A549 (cell line): ENCODE measurements at regions of chr15 and their contacts with region 1.

Region 1: GRCh38 chr15:67303490-67304363 is 49.1 kb downstream of the IQCH start:
- DNase-seq: peak; percentile 30 to 76
- ATAC-seq: peak; percentile 71 to 90
- H3K4me3 ChIP-seq: no peak overlapping the region
- H3K27ac ChIP-seq: peak overlapping the region in 1 of 2 experiments; percentile 49; a peak in 2 of 6 replicates
- H3K4me1 ChIP-seq: peaks cover 20% of the 10 kb centered on the region; the same call in 2 of the 3 replicates
- CTCF ChIP-seq: peak; percentile 96
- EP300 ChIP-seq: no peak
- POLR2A ChIP-seq: no peak
- RAD21 ChIP-seq: peak; percentile 96 to 98

Region 2: DNA sequence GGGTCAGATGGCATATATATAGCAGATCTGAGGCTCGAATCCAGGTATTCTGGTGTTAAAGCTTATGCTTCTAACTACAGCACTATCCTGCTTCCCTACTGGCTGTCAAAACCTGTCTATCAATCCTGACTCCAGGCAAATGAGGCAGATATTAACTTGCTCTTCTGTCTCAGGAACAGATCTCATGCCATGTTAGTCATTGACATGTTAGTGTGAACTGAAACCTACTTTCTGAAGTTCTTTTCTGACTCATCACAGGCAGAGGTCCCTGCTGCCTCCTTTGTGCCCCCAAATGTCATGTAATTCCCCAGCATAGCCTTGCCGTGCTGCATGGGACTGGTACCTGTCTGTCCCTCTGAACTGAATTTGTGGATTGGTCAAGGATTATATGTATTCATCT is 363.4 kb before region 1 on chr15:
- CTCF ChIA-PET with region 1: interaction called, 115 read pairs
- POLR2A ChIA-PET with region 1: no interaction called
- DNase-seq: no peak
- ATAC-seq: peak; percentile 19 to 30; a peak in 4 of 6 replicates
- H3K4me3 ChIP-seq: no peak overlapping the region
- H3K27ac ChIP-seq: peak overlapping the region; percentile 2 to 64; a peak in 4 of 6 replicates
- H3K4me1 ChIP-seq: peaks cover 27% of the 10 kb centered on the region
- CTCF ChIP-seq: no peak
- EP300 ChIP-seq: no peak
- POLR2A ChIP-seq: no peak
- RAD21 ChIP-seq: no peak

Region 3: GRCh38 chr15:67080900-67081431 is 222.8 kb before region 1 on chr15:
- CTCF ChIA-PET with region 1: interaction called, 10 read pairs
- POLR2A ChIA-PET with region 1: no interaction called
- DNase-seq: peak in 1 of 2 experiments; percentile 71
- ATAC-seq: peak in 1 of 2 experiments; percentile 7; a peak in 2 of 6 replicates
- H3K4me3 ChIP-seq: no peak overlapping the region
- H3K27ac ChIP-seq: peak overlapping the region in 1 of 2 experiments; percentile 62; a peak in 4 of 6 replicates
- H3K4me1 ChIP-seq: peaks cover 99% of the 10 kb centered on the region
- CTCF ChIP-seq: peak; percentile 31; the same call in 2 of the 3 replicates
- EP300 ChIP-seq: no peak
- POLR2A ChIP-seq: no peak
- RAD21 ChIP-seq: peak in 1 of 2 experiments; percentile 32; a peak in 3 of 5 replicates

Region 4: GRCh38 chr15:67109141-67110034 is 194.3 kb before region 1 on chr15:
- CTCF ChIA-PET with region 1: no interaction called
- POLR2A ChIA-PET with region 1: no interaction called
- DNase-seq: peak; percentile 88 to 98
- ATAC-seq: peak; percentile 35 to 48
- H3K4me3 ChIP-seq: no peak overlapping the region
- H3K27ac ChIP-seq: peak overlapping the region; percentile 92 to 93
- H3K4me1 ChIP-seq: peaks cover 79% of the 10 kb centered on the region
- CTCF ChIP-seq: no peak
- EP300 ChIP-seq: peak; percentile 97 to 100
- POLR2A ChIP-seq: no peak
- RAD21 ChIP-seq: peak; percentile 26 to 66; a peak in 4 of 5 replicates

Region 5: DNA sequence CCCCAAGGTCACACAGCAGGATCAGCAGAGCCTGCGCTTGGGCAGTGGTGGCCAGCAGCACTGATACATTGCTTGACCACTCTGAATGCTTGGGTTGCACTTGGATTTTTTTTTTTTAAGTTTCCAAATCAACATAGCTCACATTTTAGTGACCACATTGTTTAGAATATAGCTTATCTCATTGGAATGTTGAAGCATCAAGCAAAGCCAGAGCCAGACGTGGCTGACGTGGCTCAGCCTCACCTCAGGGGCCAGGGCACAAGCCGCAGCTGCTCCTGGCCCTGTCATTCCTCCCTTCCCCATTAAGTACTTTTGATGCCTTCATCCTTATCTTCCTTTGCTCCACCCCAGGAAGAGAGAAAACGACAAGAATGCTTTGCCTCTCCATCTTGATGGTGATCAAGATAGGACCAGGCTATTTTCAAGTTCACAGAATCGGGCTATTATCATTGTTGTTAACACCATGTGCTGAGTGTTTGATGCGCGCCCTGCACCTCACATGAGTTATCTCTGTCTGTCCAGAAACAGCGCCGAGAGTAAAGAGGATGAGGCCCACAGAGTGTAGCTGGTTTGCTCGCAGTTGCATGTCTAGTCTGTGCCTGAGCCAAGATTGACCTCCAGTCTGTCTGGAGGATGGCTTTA is 125.0 kb before region 1 on chr15:
- CTCF ChIA-PET with region 1: interaction called, 13 read pairs
- POLR2A ChIA-PET with region 1: no interaction called
- DNase-seq: peak in 1 of 2 experiments; percentile 69
- ATAC-seq: peak; percentile 20 to 43; a peak in 4 of 6 replicates
- H3K4me3 ChIP-seq: no peak overlapping the region
- H3K27ac ChIP-seq: peak overlapping the region; percentile 13 to 84; a peak in 4 of 6 replicates
- H3K4me1 ChIP-seq: peaks cover 79% of the 10 kb centered on the region
- CTCF ChIP-seq: no peak
- EP300 ChIP-seq: no peak
- POLR2A ChIP-seq: no peak
- RAD21 ChIP-seq: no peak

Region 6: DNA sequence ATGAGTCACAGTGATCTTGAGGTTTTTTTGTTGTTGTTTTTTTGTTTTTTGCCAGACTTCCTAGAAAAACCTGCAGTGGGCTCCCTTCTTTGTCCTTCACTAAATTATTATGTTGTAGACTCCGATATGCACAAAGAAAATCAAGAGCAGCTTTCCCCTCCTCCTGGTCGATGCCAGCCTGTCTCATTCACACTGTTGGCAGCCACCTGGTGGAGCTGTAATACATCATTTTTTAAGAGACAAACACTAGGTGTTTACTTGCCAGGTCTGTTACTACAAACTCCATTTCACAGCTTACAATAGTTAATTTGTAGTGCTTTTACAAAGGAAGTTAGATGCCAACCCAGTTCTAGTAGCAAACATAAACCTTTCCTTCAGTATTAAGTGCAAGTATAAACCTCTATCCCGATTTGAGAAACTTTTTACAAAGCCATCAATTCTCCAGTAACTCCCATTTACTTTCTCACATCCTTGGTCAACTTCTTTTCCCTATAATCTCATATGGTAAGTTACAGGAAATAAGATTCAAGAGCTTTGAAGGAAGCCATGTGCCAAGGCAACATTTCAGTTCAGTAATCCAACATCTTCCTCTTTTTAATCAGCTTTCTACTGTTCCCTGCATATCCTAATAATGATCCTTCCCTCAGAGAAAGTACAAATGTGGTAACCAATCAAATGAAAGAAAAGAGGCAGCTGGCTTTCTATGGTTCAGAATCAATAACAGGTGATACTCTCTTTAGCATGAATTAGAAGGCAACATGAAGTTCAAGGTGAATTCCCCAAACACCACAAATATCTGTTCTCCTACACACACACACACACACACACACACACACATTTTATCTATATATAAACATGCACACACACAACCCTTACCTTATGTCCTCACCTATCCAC is 63.2 kb before region 1 on chr15:
- CTCF ChIA-PET with region 1: interaction called, 13 read pairs
- POLR2A ChIA-PET with region 1: no interaction called
- DNase-seq: peak; percentile 55 to 57
- ATAC-seq: peak; percentile 91 to 95
- H3K4me3 ChIP-seq: no peak overlapping the region
- H3K27ac ChIP-seq: no peak overlapping the region
- H3K4me1 ChIP-seq: peaks cover 41% of the 10 kb centered on the region
- CTCF ChIP-seq: peak; percentile 66
- EP300 ChIP-seq: no peak
- POLR2A ChIP-seq: no peak
- RAD21 ChIP-seq: peak; percentile 66 to 74

Region 7: DNA sequence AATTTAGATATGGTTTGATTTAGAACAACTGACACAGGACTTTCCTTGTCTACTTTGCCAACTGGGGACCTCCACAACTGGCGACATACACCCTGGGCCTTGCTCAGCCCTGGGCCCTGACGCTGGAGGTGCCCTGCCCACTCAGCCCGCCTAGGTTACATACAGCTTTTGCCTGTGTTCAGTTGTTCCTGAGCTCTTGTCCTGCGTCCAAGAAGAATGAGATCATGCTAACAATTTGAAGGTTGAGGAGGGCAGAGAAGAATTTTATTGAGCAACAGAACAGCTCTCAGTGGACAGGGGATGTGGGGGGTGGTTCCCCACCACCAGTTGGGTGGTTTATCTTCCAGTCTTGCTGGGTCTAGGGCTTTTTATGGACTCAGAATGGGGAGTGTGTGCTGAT is 18.8 kb after region 1 on chr15:
- CTCF ChIA-PET with region 1: interaction called, 17 read pairs
- POLR2A ChIA-PET with region 1: no interaction called
- DNase-seq: no peak
- ATAC-seq: no peak
- H3K4me3 ChIP-seq: no peak overlapping the region
- H3K27ac ChIP-seq: no peak overlapping the region
- H3K4me1 ChIP-seq: no peaks in the 10 kb centered on the region
- CTCF ChIP-seq: no peak
- EP300 ChIP-seq: no peak
- POLR2A ChIP-seq: no peak
- RAD21 ChIP-seq: no peak